CD4-positive, alpha-beta memory T cell (primary cell): ENCODE measurements at regions of chr10 and their contacts with region 1.

Region 1: GRCh38 chr10:99612167-99612831 is 7.9 kb downstream of the SLC25A28 start:
- DNase-seq: peak; percentile 46 to 61 (median 51)
- H3K4me3 ChIP-seq: no peak overlapping the region
- H3K4me3 Mint-ChIP-seq: peak overlapping the region in 1 of 8 donors; percentile 53
- H3K27ac ChIP-seq: no peak overlapping the region
- H3K27ac Mint-ChIP-seq: peak overlapping the region; percentile 24 to 85 (median 62)
- H3K4me1 ChIP-seq: peaks cover 18% of the 10 kb centered on the region
- H3K4me1 Mint-ChIP-seq: peaks cover 16 to 32% (median 26%) of the 10 kb centered on the region in 4 donors
- H3K27me3 ChIP-seq: no peaks in the 10 kb centered on the region
- H3K27me3 Mint-ChIP-seq: no peaks in the 10 kb centered on the region

Region 2: GRCh38 chr10:98115031-98115787 is 1497.1 kb before region 1 on chr10:
- CTCF ChIA-PET with region 1: no interaction called
- POLR2A ChIA-PET with region 1: no interaction called
- intact Hi-C with region 1: no loop called
- DNase-seq: no peak
- H3K4me3 ChIP-seq: no peak overlapping the region
- H3K4me3 Mint-ChIP-seq: no peak overlapping the region
- H3K27ac ChIP-seq: no peak overlapping the region
- H3K27ac Mint-ChIP-seq: no peak overlapping the region
- H3K4me1 ChIP-seq: no peaks in the 10 kb centered on the region
- H3K4me1 Mint-ChIP-seq: no peaks in the 10 kb centered on the region
- H3K27me3 ChIP-seq: peaks cover 5% of the 10 kb centered on the region
- H3K27me3 Mint-ChIP-seq: peaks cover 29 to 41% of the 10 kb centered on the region in 2 donors

Region 3: DNA sequence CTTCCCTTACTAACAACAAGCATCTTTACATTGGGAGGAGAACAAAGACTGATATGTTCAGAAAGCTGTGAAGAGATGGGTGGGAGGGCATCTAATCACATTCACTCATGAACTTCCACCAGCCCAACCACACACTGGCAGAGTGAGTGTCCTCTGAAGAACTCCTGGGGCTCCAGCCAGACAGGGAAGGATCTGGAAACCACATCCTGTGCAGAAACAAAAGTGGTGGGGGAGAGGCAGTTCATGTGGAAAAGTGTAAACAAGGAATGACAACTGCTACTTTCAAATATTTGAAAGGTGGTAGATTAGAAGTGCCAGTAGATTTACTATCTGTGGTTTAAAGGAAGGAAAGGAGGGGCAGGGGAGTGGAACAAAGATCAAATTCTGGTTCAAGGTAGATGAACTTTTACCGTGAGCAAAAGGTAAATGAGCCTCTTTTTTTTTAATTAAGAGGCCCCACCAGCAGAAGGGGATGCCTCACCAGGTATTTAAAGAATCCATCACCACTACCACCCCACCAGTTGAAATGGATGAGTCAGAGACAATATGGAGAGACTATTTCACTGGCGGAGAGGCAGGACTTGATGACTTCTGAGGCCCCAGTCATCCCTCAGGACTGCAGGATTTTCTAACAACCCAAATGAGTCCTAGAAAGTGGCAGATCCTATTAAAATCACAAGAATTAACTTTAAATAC is 216.4 kb before region 1 on chr10:
- CTCF ChIA-PET with region 1: interaction called, 35 read pairs
- POLR2A ChIA-PET with region 1: no interaction called
- intact Hi-C with region 1: loop called (anchors 1 kb)
- DNase-seq: no peak
- H3K4me3 ChIP-seq: no peak overlapping the region
- H3K4me3 Mint-ChIP-seq: no peak overlapping the region
- H3K27ac ChIP-seq: no peak overlapping the region
- H3K27ac Mint-ChIP-seq: peak overlapping the region in 5 of 7 donors; percentile 25 to 79 (median 66)
- H3K4me1 ChIP-seq: no peaks in the 10 kb centered on the region
- H3K4me1 Mint-ChIP-seq: peaks cover 0 to 8% (median 5%) of the 10 kb centered on the region in 4 donors
- H3K27me3 ChIP-seq: no peaks in the 10 kb centered on the region
- H3K27me3 Mint-ChIP-seq: no peaks in the 10 kb centered on the region

Region 4: GRCh38 chr10:99560277-99561126 is 51.8 kb before region 1 on chr10:
- CTCF ChIA-PET with region 1: interaction called, 18 read pairs
- POLR2A ChIA-PET with region 1: no interaction called
- intact Hi-C with region 1: loop called (anchors 1 kb)
- DNase-seq: peak in 4 of 5 donors; percentile 14 to 32 (median 32)
- H3K4me3 ChIP-seq: no peak overlapping the region
- H3K4me3 Mint-ChIP-seq: no peak overlapping the region
- H3K27ac ChIP-seq: no peak overlapping the region
- H3K27ac Mint-ChIP-seq: no peak overlapping the region
- H3K4me1 ChIP-seq: peaks cover 9% of the 10 kb centered on the region
- H3K4me1 Mint-ChIP-seq: peaks cover 6 to 11% (median 9%) of the 10 kb centered on the region in 4 donors
- H3K27me3 ChIP-seq: no peaks in the 10 kb centered on the region
- H3K27me3 Mint-ChIP-seq: peaks cover 11 to 12% of the 10 kb centered on the region in 2 donors

Region 5: DNA sequence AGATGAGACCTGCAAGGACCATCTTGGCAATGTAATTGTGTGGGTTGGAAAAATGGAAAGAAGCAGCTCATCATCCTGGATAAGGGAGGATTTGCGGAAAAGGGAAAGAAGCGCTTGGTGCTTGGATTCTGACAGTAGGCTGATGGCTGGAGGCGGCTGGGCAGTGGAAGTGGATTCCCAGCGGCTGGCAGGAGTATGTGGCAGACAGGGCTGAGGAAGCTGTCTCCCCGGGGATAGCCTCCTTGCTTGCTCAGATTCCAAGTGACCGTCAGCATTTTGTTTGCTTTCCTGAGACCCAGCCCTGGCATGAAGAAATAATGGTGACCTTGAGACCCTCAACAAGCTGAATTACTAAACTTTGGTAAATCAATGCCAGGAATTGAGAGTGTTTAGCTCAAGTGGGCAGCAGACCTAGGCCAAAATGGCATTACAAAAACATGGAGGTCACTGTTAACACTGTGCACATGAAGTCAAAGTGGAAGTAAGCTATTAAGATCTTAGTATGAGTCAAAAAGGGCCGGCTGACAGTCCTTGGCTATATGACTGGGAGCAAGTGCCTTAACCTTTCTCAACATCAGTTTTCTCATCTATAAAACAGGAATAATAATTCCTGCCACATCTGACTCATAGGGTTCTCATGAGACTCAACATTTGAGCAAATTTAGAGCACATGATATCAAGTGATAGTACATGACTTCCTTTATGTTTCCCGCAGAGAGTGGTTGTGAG is 13.4 kb before region 1 on chr10:
- CTCF ChIA-PET with region 1: interaction called, 10 read pairs
- POLR2A ChIA-PET with region 1: no interaction called
- intact Hi-C with region 1: no loop called
- DNase-seq: no peak
- H3K4me3 ChIP-seq: no peak overlapping the region
- H3K4me3 Mint-ChIP-seq: no peak overlapping the region
- H3K27ac ChIP-seq: no peak overlapping the region
- H3K27ac Mint-ChIP-seq: no peak overlapping the region
- H3K4me1 ChIP-seq: no peaks in the 10 kb centered on the region
- H3K4me1 Mint-ChIP-seq: no peaks in the 10 kb centered on the region
- H3K27me3 ChIP-seq: peaks cover 4% of the 10 kb centered on the region
- H3K27me3 Mint-ChIP-seq: peaks cover 2 to 13% of the 10 kb centered on the region in 2 donors

Region 6: GRCh38 chr10:99667108-99667751 is 54.9 kb after region 1 on chr10:
- CTCF ChIA-PET with region 1: no interaction called
- POLR2A ChIA-PET with region 1: no interaction called
- intact Hi-C with region 1: no loop called
- DNase-seq: no peak
- H3K4me3 ChIP-seq: no peak overlapping the region
- H3K4me3 Mint-ChIP-seq: no peak overlapping the region
- H3K27ac ChIP-seq: no peak overlapping the region
- H3K27ac Mint-ChIP-seq: no peak overlapping the region
- H3K4me1 ChIP-seq: no peaks in the 10 kb centered on the region
- H3K4me1 Mint-ChIP-seq: peaks cover 0 to 2% (median 2%) of the 10 kb centered on the region in 4 donors
- H3K27me3 ChIP-seq: no peaks in the 10 kb centered on the region
- H3K27me3 Mint-ChIP-seq: no peaks in the 10 kb centered on the region